ENCODE measurements at regions of chr6 and their contacts with region 1.

Region 1: DNA sequence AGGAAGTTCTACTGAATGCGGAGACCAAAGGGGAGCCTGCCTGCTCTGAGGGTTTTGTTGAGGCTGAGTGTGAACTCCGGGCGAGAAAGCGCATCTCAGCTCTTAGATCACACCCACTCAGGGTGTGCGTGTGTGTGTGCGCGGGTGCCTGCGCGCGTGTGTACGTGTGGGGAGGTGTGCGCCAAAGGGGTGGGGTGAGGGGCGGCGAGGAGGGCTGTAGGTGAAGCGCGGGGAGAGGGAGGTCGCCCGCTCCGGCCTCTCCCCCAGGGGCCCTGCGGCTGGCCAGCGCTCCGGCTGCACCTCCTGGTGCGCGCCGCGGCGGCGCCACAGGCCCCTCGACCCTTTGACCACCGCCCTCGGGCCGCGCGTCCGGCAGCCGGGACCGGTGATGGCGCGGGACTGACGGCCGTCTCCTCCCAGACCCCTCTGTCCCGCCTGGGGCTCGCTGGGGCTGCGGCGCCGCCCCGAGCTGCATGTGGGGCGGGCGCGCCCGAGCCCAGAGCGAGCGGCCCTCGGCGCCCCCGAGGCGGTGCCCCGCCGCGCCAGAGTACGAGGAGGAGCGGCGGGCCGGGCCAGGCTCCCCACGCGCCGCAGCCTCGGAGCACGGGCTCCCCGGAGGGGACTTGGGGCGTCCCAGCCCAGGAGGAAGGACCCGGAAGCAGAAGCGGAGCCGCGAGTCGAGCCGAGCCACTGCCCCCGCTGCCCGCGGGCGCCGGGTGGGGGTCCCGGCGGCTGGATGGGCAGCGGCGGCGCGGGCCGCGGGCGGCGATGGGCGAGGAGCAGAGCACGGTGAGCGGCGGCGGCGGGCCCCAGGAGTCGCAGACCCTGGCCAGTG is at the start of gene RNF217:
- DNase-seq: peak; percentile 36 to 87 (median 70)

Region 2: DNA sequence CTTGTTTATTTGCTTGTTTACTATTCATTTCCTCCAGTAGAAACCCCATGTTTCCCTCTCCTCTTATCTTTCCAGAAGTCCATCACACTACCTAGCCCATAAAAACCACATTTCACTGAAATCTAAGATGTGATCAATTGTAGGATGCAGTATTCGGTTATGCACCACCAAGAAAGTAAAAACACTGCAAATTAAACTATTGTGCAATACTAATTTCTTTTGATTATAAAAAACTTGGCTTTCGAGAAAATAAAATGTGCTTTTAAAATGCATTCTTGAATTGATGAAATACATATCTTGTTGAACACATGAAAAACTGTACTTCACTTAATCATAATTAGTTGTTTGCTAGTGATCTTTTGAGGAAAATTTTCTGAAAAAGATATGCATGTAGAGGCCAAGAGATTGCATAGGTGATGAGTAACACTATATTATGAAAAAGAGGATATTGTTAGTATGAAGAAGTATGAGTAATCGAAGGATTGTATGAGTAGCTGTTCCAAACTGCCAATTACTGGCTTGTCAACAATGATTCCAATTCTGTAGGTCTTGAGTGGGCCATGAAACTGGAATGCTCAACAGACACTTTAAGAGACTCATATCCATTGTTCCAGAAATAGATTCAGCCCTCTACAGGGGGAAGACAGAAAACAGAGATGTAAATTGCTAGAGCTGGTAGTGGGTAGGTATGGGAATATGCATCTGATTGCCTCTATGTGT is 79.9 kb after region 1 on chr6:
- intact Hi-C with region 1: loop called (anchors 10 kb)
- DNase-seq: no peak

Region 3: GRCh38 chr6:125099211-125100073 is 137.4 kb after region 1 on chr6:
- intact Hi-C with region 1: loop called (anchors 2 kb)
- DNase-seq: peak; percentile 66 to 93 (median 84)

Region 4: DNA sequence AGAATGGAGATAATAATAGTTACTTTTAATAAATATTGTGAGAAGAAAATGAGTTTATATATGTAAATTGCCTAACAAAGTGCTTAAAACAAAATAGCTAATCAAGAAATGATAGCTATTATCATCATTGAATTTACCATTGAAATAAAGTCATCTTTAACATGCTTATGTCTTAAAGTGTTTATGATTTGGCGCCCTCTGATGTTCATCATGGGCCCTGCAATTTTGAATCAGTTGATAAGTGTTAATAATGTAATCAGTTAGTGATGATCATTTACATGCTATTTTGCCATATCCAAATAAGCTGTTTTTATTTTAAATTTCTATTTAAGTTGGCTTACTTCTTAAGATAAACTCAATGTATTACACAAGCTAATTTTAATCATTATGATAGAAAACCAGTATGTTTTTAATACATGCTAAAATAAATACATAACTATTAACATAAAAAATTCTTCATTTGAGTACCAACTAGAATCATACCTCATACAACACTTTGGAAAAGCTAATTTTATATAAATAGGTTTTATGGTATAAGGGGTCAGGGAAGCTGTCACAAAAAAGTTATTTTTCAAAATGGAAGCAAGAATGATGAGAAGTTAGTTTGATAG is 152.4 kb after region 1 on chr6:
- intact Hi-C with region 1: loop called (anchors 5 kb)
- DNase-seq: peak in 40 of 42 donors; percentile 5 to 91 (median 68)